Esophagus muscularis mucosa (tissue), 4 donors: ENCODE measurements at regions of chr6 and their contacts with region 1.

Region 1: GRCh38 chr6:30357678-30358540 is 13.0 kb downstream of the RPP21 start:
- DNase-seq: no peak
- H3K4me3 ChIP-seq: peak overlapping the region; percentile 39 to 69 (median 55)
- H3K27ac ChIP-seq: peak overlapping the region; percentile 60 to 85 (median 76)
- H3K4me1 ChIP-seq: peaks cover 0 to 16% (median 9%) of the 10 kb centered on the region in 4 donors
- H3K27me3 ChIP-seq: peaks cover 0 to 37% (median 12%) of the 10 kb centered on the region in 4 donors
- CTCF ChIP-seq: peak; percentile 71 to 90 (median 81)
- EP300 ChIP-seq: no peak
- POLR2A ChIP-seq: no peak

Region 2: GRCh38 chr6:30396833-30397479 is 39.0 kb after region 1 on chr6:
- intact Hi-C with region 1: loop called (anchors 2 kb)
- DNase-seq: peak; percentile 94
- H3K4me3 ChIP-seq: no peak overlapping the region
- H3K27ac ChIP-seq: no peak overlapping the region
- H3K4me1 ChIP-seq: peaks cover 0 to 8% (median 4%) of the 10 kb centered on the region in 4 donors
- H3K27me3 ChIP-seq: peaks cover 0 to 20% (median 0%) of the 10 kb centered on the region in 4 donors
- CTCF ChIP-seq: peak; percentile 79 to 93 (median 81)
- EP300 ChIP-seq: no peak
- POLR2A ChIP-seq: no peak